MCF 10A (cell line): ENCODE measurements at regions of chr4 and their contacts with region 1.

Region 1: DNA sequence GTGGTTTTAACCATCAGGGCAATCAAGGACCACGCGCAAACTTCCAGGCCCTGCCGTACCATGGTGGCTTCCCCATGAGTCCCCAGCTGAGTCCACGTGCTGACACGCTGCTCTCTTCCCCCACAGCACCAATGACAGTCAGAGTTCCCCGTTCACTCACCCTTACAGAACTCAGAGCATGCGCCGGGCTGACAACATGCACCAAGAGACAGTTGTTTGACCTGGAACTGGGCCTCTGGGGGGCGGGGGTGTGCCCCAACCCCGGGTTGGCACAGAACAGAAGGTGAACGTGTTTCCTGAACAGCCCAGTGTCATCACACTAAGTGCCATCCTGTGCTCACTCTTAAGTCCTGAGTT is 29.4 kb downstream of the IRF2 start:
- DNase-seq: no peak
- H3K4me3 Mint-ChIP-seq: no peak overlapping the region
- H3K27ac Mint-ChIP-seq: no peak overlapping the region
- H3K4me1 Mint-ChIP-seq: peaks cover 13% of the 10 kb centered on the region
- H3K27me3 Mint-ChIP-seq: no peaks in the 10 kb centered on the region
- CTCF ChIP-seq: no peak

Region 2: GRCh38 chr4:184417802-184418511 is 27.0 kb before region 1 on chr4:
- CTCF ChIA-PET with region 1: interaction called, 3 read pairs
- POLR2A ChIA-PET with region 1: no interaction called
- intact Hi-C with region 1: loop called (anchors 1 kb)
- DNase-seq: peak; percentile 95
- H3K4me3 Mint-ChIP-seq: peak overlapping the region; percentile 47
- H3K27ac Mint-ChIP-seq: peak overlapping the region; percentile 47
- H3K4me1 Mint-ChIP-seq: peaks cover 24% of the 10 kb centered on the region
- H3K27me3 Mint-ChIP-seq: no peaks in the 10 kb centered on the region
- CTCF ChIP-seq: no peak